BJ (cell line): ENCODE measurements at regions of chr16 and their contacts with region 1.

Region 1: DNA sequence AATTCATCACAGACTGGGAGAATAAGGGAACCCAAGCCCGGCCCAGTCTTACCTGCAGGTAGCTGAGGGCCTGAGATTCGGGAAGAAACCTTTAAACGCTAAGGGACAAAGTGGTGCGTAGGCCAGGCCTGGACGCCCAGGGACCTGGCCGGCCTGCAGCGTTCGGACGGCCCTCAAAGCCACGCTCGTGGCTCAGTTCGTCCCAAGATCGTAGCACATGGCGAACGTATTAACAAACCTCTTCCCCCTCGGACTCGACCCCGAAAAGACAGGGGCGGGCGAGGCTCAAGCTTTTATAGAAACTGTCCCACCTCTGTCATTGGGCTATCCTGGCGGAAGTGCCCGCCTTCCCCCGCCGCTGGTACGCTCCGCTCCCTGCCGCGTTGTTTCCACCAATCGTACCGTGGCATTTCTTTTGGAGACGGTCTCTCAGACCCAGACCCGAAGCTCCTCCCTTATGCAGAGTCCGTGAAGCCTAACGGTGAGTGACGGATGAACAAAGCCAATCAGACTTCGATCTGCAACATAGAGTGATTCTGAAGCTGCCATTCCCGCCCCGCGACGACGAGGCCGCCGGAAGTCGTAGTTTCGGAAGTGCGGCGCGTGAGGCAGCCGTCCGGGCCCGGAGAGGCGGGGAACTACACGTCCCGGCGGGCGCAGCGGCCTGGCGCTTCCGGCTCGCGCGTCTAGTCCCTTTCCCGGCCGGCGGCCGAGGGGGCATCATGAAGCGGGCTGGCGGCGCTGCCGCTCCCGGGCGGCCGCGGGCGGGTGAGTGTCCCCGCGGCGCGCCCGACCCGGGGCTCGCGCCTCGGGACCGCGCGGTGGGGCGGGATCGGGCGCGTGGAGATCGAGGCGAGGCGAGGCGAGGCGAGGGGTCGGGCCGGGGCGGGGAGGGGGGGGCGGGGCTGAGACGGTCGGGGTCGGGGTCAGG is at the start of gene TRAF7:
- DNase-seq: peak; percentile 100
- H3K4me3 ChIP-seq: peak within 1 kb of the TSS; percentile 87
- H3K27me3 ChIP-seq: no peaks in the 10 kb centered on the region
- CTCF ChIP-seq: no peak
- polyA plus RNA-seq, gene TRAF7: 37.0 and 68.1 TPM in 2 replicates

Region 2: DNA sequence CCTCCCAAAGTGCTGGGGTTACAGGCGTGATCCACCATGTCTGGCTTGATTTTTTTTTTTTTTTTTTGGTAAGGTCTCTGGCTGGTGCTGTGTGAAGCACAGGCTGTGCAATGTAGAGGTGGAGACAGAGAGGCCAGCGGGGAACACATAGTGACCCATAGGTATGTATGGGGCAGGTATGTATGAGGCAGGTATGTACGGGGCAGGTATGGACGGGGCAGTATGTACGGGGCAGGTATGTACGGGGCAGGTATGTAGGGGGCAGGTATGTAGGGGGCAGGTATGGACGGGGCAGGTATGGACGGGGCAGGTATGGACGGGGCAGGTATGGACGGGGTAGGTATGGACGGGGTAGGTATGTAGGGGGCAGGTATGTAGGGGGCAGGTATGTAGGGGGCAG is 205.8 kb before region 1 on chr16:
- CTCF ChIA-PET with region 1: no interaction called
- POLR2A ChIA-PET with region 1: interaction called, 22 read pairs
- DNase-seq: no peak
- H3K4me3 ChIP-seq: no peak overlapping the region
- H3K27me3 ChIP-seq: no peaks in the 10 kb centered on the region
- CTCF ChIP-seq: no peak

Region 3: GRCh38 chr16:2102471-2102870 is 52.9 kb before region 1 on chr16:
- CTCF ChIA-PET with region 1: no interaction called
- POLR2A ChIA-PET with region 1: no interaction called
- DNase-seq: no peak
- H3K4me3 ChIP-seq: no peak overlapping the region
- H3K27me3 ChIP-seq: no peaks in the 10 kb centered on the region
- CTCF ChIP-seq: no peak